ENCODE measurements at regions of chr15 and their contacts with region 1.

Region 1: DNA sequence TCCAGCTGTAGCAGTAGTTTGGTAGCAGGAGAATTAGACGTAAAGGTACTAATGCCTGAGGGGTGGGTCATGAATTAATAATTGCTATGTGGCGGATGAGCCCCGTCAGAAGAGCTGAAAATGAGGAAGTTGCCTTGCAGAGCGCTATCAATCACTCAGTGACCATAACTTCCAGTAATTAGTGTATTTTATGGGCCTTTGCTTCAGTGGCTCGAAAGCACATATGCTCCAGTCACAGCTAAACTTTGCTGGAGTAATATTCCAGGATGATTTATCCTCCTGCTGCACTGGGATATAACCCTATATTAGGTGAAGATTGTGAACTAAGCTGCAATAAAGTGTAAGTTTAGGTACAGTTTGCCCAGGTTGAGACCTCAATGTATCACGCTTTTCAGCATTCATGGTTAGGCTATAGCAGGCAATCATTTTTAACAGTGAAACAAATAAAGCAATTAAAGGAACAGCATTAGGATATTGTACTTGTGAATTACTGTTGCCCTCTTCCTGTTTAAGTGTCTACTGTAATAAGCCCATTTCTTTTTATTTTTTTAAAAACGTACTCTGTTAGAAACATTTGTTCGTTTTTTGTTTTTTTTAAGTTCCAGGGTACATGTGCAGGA is 104.6 kb upstream of the SKOR1 start:
- DNase-seq: no peak
- H3K4me3 ChIP-seq: no peak overlapping the region
- H3K27ac ChIP-seq: no peak overlapping the region
- H3K4me1 ChIP-seq: no peaks in the 10 kb centered on the region
- H3K27me3 ChIP-seq: no peaks in the 10 kb centered on the region
- CTCF ChIP-seq: no peak
- EP300 ChIP-seq: no peak
- POLR2A ChIP-seq: no peak

Region 2: DNA sequence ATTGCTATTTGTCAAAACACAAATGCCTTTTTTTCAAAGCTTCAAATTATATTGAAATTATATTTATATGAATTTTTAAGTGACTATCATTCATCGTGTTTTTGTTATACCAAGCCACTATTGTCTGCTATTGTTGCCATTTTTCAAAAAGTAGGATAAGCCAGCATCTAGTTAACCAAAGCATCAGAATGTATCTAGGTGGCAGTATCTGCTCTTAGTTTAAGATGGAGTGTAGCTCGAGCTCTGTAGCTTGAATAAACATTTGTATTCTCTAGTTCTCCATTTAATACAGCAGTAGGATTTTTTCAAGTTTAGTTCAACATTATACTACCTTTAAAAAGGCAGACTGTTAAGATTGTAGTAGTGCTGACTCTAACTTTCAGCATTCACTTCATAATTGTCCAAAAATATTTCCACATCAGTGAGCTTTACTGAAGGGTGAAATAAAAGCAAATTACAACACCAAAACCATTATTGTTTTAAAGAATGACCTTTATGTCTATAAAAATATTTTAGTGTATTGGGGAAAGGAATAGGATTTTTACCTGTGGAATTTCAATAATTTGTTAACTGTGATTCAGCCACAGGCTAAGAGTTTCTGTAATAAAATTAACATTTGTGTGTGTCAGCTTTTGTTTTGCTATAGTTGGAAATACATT is 219.4 kb before region 1 on chr15:
- intact Hi-C with region 1: no loop called
- DNase-seq: no peak
- H3K4me3 ChIP-seq: no peak overlapping the region
- H3K27ac ChIP-seq: no peak overlapping the region
- H3K4me1 ChIP-seq: no peaks in the 10 kb centered on the region
- H3K27me3 ChIP-seq: no peaks in the 10 kb centered on the region
- CTCF ChIP-seq: no peak
- EP300 ChIP-seq: no peak
- POLR2A ChIP-seq: no peak

Region 3: GRCh38 chr15:67746022-67746421 is 25.4 kb after region 1 on chr15:
- intact Hi-C with region 1: no loop called
- DNase-seq: no peak
- H3K4me3 ChIP-seq: no peak overlapping the region
- H3K27ac ChIP-seq: no peak overlapping the region
- H3K4me1 ChIP-seq: no peaks in the 10 kb centered on the region
- H3K27me3 ChIP-seq: no peaks in the 10 kb centered on the region
- CTCF ChIP-seq: no peak
- EP300 ChIP-seq: no peak
- POLR2A ChIP-seq: no peak

Region 4: DNA sequence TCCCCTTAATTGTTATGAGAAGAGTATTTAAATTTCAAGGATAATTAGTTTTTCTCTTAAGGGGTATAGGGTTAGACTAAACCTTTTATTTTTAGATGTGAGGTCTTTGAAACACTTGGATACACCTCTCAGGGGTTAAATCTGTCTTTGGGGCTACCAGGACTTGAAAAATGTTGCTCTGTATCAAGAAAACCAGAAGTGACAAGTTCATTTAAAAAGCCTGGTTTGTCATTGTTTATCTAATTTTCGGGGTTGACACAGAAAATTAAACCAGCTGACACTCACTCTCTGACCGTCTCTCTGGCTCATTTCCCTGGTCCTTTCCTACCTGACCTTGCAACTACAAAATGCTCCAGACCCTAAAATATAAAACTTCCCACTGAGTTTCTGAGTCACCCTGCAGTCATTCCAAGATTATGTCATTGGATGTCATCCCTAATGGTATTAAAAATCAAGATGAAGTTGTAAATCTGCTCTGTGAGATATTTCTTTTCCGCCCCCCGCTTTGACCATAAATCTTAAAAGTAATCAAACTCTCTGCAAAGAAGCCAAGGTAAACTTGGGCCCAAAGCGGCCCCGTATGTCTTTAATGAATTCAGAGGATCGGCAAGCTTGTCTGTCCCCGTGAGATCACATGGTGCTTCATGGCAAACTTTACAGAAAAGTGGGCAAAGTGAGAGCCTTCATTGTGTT is 71.7 kb after region 1 on chr15:
- intact Hi-C with region 1: loop called in 1 of 4 experiments (anchors 5 kb)
- DNase-seq: no peak
- H3K4me3 ChIP-seq: no peak overlapping the region
- H3K27ac ChIP-seq: no peak overlapping the region
- H3K4me1 ChIP-seq: no peaks in the 10 kb centered on the region
- H3K27me3 ChIP-seq: no peaks in the 10 kb centered on the region
- CTCF ChIP-seq: no peak
- EP300 ChIP-seq: no peak
- POLR2A ChIP-seq: no peak

Region 5: DNA sequence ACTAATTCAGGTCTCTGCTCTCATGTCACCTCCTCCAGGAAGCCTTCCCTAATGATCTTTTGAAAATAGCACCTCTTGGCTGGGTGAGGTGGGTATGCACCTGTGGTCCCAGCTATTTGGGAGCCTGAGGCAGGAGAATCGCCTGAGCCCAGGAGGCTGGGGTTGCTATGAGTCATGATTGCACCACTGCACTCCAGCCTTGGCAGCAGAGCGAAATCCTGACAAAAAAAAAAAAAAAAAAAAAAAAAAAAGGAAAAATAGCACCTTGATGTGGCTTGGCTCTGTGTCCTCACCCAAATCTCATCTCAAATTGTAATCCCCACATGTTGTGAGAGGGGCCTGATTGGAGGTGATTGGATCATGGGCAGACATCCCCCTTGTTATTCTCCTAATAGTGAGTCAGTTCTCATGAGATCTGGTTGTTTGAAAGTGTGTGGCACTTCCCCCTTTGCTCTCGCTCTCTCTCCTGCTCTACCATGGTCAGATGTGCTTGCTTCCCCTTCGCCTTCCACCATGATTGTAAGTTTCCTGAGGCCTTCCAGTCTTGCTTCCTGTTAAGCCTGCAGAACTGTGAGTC is 130.4 kb after region 1 on chr15:
- intact Hi-C with region 1: no loop called
- DNase-seq: no peak
- H3K4me3 ChIP-seq: no peak overlapping the region
- H3K27ac ChIP-seq: no peak overlapping the region
- H3K4me1 ChIP-seq: no peaks in the 10 kb centered on the region
- H3K27me3 ChIP-seq: no peaks in the 10 kb centered on the region
- CTCF ChIP-seq: no peak
- EP300 ChIP-seq: no peak
- POLR2A ChIP-seq: no peak

Measured in ovary (tissue), 10 donors.